ENCODE measurements at regions of chr1 and their contacts with region 1.

Region 1: GRCh38 chr1:32351399-32352238 is 10.7 kb downstream of the FAM229A start:
- DNase-seq: peak; percentile 88 to 95 (median 90)
- H3K4me3 ChIP-seq: peak overlapping the region; percentile 49
- H3K4me3 Mint-ChIP-seq: peak overlapping the region; percentile 80 to 96 (median 84)
- H3K27ac ChIP-seq: peak overlapping the region; percentile 72
- H3K27ac Mint-ChIP-seq: peak overlapping the region; percentile 54 to 93 (median 88)
- H3K4me1 ChIP-seq: peaks cover 31% of the 10 kb centered on the region
- H3K4me1 Mint-ChIP-seq: peaks cover 31 to 49% (median 42%) of the 10 kb centered on the region in 3 donors
- H3K27me3 ChIP-seq: no peaks in the 10 kb centered on the region
- H3K27me3 Mint-ChIP-seq: no peaks in the 10 kb centered on the region

Region 2: GRCh38 chr1:32307323-32307722 is 44.3 kb before region 1 on chr1:
- CTCF ChIA-PET with region 1: no interaction called
- POLR2A ChIA-PET with region 1: no interaction called
- DNase-seq: no peak
- H3K4me3 ChIP-seq: no peak overlapping the region
- H3K4me3 Mint-ChIP-seq: no peak overlapping the region
- H3K27ac ChIP-seq: no peak overlapping the region
- H3K27ac Mint-ChIP-seq: peak overlapping the region; percentile 1 to 83 (median 44)
- H3K4me1 ChIP-seq: peaks cover 47% of the 10 kb centered on the region
- H3K4me1 Mint-ChIP-seq: peaks cover 56 to 77% (median 75%) of the 10 kb centered on the region in 3 donors
- H3K27me3 ChIP-seq: no peaks in the 10 kb centered on the region
- H3K27me3 Mint-ChIP-seq: no peaks in the 10 kb centered on the region

Region 3: DNA sequence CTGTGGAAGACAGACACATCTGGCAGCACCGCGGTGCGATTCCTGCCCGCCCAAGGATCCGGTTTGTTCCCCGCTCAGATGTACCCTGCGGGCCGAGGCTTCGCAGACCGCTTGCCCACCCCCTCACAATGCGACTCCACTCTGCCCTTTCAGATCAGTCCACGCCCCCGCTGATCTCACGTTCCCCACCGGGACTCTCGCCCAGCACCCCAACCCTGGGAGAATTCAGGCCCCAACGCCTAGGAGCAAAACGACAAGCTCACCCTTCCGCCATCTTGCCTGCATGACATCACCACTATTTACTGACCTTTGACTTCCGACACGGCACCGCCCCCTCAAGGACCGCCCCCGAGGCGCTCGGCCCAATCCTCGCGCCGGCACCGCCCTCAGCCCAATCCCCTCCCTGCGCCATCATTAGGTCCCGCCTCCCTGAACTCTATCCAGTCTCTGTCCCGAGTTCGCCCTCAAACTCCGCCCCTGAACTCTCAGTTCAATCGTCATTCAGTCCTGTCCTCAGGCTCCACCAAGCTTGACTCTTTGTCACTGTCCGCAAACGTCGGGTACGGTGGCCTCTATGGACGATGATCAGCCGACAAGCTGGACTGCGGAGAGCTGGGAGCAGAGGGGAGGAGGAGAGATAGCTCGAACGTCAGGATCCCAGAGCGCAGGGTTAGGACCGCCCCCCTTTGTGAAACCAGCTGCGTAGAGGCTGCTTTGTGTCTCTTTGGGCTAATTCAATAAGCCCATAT is 42.7 kb after region 1 on chr1 and contains the start of gene BSDC1:
- CTCF ChIA-PET with region 1: no interaction called
- POLR2A ChIA-PET with region 1: interaction called, 10 read pairs
- DNase-seq: peak; percentile 96 to 98 (median 97)
- H3K4me3 ChIP-seq: peak within 1 kb of the TSS; percentile 99
- H3K4me3 Mint-ChIP-seq: peak within 1 kb of the TSS; percentile 92 to 100 (median 98)
- H3K27ac ChIP-seq: peak within 1 kb of the TSS; percentile 99
- H3K27ac Mint-ChIP-seq: peak within 1 kb of the TSS; percentile 84 to 100 (median 100)
- H3K4me1 ChIP-seq: peaks cover 39% of the 10 kb centered on the region
- H3K4me1 Mint-ChIP-seq: peaks cover 12 to 26% (median 14%) of the 10 kb centered on the region in 3 donors
- H3K27me3 ChIP-seq: no peaks in the 10 kb centered on the region
- H3K27me3 Mint-ChIP-seq: peaks cover 0 to 2% of the 10 kb centered on the region in 2 donors
- total RNA-seq, gene BSDC1: 35.1 to 37.6 TPM

Measured in CD8-positive, alpha-beta memory T cell (primary cell).